Endothelial cell of umbilical vein (primary cell): ENCODE measurements at regions of chr3 and their contacts with region 1.

Region 1: GRCh38 chr3:187223799-187224198 is 26.5 kb downstream of the RTP1 start:
- DNase-seq: no peak
- H3K4me3 ChIP-seq: no peak overlapping the region
- H3K27ac ChIP-seq: no peak overlapping the region
- H3K4me1 ChIP-seq: no peaks in the 10 kb centered on the region
- H3K27me3 ChIP-seq: no peaks in the 10 kb centered on the region
- CTCF ChIP-seq: no peak
- POLR2A ChIP-seq: no peak

Region 2: GRCh38 chr3:187210545-187211327 is 13.1 kb before region 1 on chr3:
- CTCF ChIA-PET with region 1: interaction called, 19 read pairs
- POLR2A ChIA-PET with region 1: no interaction called
- dilution Hi-C with region 1: no loop called
- intact Hi-C with region 1: no loop called
- DNase-seq: no peak
- H3K4me3 ChIP-seq: no peak overlapping the region
- H3K27ac ChIP-seq: no peak overlapping the region
- H3K4me1 ChIP-seq: no peaks in the 10 kb centered on the region
- H3K27me3 ChIP-seq: peaks cover 0 to 2% of the 10 kb centered on the region in 2 experiments
- CTCF ChIP-seq: no peak
- POLR2A ChIP-seq: no peak

Region 3: GRCh38 chr3:187264021-187264420 is 40.2 kb after region 1 on chr3:
- CTCF ChIA-PET with region 1: interaction called, 23 read pairs
- POLR2A ChIA-PET with region 1: no interaction called
- dilution Hi-C with region 1: no loop called
- intact Hi-C with region 1: no loop called
- DNase-seq: peak; percentile 91
- H3K4me3 ChIP-seq: no peak overlapping the region
- H3K27ac ChIP-seq: peak overlapping the region; percentile 47
- H3K4me1 ChIP-seq: peaks cover 32% of the 10 kb centered on the region
- H3K27me3 ChIP-seq: no peaks in the 10 kb centered on the region
- CTCF ChIP-seq: no peak
- POLR2A ChIP-seq: no peak

Region 4: GRCh38 chr3:187295316-187296034 is 71.7 kb after region 1 on chr3:
- CTCF ChIA-PET with region 1: interaction called, 31 read pairs
- POLR2A ChIA-PET with region 1: no interaction called
- dilution Hi-C with region 1: no loop called
- intact Hi-C with region 1: loop called (anchors 1 kb)
- DNase-seq: no peak
- H3K4me3 ChIP-seq: no peak overlapping the region
- H3K27ac ChIP-seq: no peak overlapping the region
- H3K4me1 ChIP-seq: no peaks in the 10 kb centered on the region
- H3K27me3 ChIP-seq: peaks cover 3% of the 10 kb centered on the region in 2 experiments
- CTCF ChIP-seq: no peak
- POLR2A ChIP-seq: no peak

Region 5: GRCh38 chr3:187616307-187616972 is 392.6 kb after region 1 on chr3:
- CTCF ChIA-PET with region 1: interaction called, 6 read pairs
- POLR2A ChIA-PET with region 1: no interaction called
- dilution Hi-C with region 1: no loop called
- intact Hi-C with region 1: loop called (anchors 2 kb)
- DNase-seq: peak; percentile 37
- H3K4me3 ChIP-seq: no peak overlapping the region
- H3K27ac ChIP-seq: no peak overlapping the region
- H3K4me1 ChIP-seq: no peaks in the 10 kb centered on the region
- H3K27me3 ChIP-seq: no peaks in the 10 kb centered on the region
- CTCF ChIP-seq: peak; percentile 64 to 74
- POLR2A ChIP-seq: no peak

Region 6: GRCh38 chr3:187709155-187709554 is 485.4 kb after region 1 on chr3:
- CTCF ChIA-PET with region 1: interaction called, 99 read pairs
- POLR2A ChIA-PET with region 1: no interaction called
- dilution Hi-C with region 1: no loop called
- intact Hi-C with region 1: loop called (anchors 1 kb)
- DNase-seq: no peak
- H3K4me3 ChIP-seq: no peak overlapping the region
- H3K27ac ChIP-seq: no peak overlapping the region
- H3K4me1 ChIP-seq: no peaks in the 10 kb centered on the region
- H3K27me3 ChIP-seq: no peaks in the 10 kb centered on the region
- CTCF ChIP-seq: no peak
- POLR2A ChIP-seq: no peak

Region 7: DNA sequence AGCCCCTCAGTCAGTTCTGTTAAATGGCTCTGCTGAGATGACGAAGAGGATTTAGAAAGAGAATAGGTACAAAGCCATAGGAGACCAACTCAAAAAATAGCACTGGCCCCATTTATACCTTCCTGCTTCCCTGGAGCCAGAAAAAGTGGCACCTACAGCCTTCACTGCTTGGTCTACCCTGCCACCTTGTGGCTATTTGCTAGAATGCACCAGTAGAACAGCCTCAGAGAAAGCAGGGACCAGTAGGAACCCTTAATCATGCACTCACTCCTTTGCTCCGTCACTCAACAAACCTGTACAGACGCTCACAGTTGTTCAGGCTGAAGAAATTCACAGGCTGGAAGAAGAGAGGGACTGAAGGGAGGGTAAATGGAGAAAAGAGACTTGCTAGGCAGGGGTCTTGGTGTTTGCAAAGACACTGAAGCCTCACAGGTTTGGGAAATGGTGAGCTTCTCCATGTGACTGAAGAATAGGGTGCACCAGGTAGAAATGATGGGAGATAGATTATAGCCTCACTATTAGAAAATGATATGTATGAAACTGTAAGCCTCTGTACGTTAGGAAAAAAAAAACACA is 490.7 kb after region 1 on chr3:
- CTCF ChIA-PET with region 1: interaction called, 99 read pairs
- POLR2A ChIA-PET with region 1: no interaction called
- dilution Hi-C with region 1: no loop called
- intact Hi-C with region 1: loop called (anchors 1 kb)
- DNase-seq: peak; percentile 71
- H3K4me3 ChIP-seq: no peak overlapping the region
- H3K27ac ChIP-seq: no peak overlapping the region
- H3K4me1 ChIP-seq: no peaks in the 10 kb centered on the region
- H3K27me3 ChIP-seq: no peaks in the 10 kb centered on the region
- CTCF ChIP-seq: peak; percentile 87 to 89
- POLR2A ChIP-seq: no peak